ENCODE measurements at regions of chr13 and their contacts with region 1.

Region 1: DNA sequence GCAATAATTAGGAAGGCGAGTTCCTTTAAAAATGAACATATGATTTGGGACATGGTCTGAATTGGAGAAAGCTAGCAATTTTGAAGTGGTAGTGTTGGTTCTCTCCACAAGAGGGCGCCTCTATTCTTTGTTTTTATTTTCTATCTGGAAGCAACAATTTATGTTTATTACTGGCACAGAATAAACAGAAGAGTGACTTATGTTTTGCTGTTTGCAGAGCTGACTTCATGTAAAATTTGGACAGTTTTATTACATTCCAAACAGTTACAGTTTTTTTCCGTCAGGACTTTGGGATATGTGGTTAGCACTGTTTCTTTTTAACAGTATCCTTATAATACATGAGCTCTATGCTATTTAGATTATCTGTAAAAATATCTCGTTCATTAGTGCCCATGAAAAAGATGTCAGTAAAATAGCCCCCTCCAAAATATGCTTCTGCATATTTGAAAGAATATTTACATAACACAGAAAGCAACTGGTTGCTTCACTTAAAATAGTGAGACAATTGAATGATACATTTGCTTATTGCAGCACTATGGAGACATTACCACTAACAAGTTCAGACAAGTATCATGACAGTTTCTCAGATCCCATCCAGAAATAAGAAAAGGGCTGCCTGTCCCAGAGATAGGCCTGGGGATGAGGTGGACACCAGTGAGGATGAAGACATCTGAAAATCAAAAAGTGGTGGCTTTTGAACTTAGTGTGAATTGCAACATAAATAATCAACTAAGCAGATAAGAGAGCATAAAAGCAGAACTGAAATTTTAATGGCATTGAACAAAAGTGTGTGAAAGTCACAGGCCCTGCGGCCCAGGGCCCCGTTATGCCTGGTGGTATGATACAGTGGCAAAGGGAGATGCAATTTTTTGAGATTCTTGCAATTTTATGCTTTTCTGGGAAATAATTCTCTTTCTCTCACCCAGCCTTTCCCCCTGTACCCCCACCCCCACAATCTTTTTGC is 32.3 kb upstream of the FGF9 start:
- DNase-seq: peak; percentile 28
- H3K4me3 ChIP-seq: no peak overlapping the region
- H3K27ac ChIP-seq: no peak overlapping the region
- H3K4me1 ChIP-seq: no peaks in the 10 kb centered on the region
- H3K27me3 ChIP-seq: no peaks in the 10 kb centered on the region
- CTCF ChIP-seq: peak; percentile 30 to 59
- POLR2A ChIP-seq: no peak

Region 2: DNA sequence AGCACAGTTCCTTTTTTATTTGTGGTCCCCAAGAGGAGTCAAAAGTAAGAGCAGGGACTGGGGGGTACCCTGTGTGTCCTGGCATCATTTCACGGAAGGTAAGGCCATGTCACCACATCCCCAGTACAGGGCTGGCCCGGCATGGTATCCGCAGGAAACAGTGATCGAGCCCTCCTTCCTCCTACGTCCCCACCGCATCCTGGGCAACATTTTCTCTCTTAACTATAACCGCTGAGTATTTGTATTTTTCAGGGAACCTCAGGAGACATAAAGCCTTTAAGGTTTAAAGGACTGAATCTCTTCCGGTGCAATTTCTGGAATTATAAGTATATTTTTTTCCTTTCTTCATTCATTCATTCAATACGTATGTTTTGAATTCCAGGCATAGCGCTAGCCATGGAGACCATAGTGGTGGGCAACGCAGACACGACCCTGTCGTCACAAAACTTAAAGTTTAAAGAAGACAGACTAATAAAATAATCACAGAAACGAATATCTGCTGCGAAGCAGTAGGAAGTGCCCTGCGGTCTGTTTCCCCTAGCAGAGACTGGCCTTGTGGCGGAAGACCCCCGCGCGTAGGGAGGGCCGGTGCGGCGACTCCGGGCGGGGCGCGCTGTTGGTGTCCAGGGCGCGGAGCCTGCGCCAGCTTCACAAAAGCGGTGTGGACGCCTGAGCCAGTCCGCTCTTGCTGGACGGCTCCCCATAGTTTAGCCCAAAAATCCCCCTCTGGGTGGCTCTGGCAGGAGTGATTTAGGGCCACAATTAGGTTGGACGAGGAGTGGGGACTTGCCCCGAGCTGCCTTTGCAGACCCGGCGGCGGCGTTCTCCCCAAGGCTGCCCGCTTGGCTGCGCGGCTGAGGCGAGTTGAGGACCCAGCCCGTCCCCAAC is 563.3 kb before region 1 on chr13:
- CTCF ChIA-PET with region 1: no interaction called
- POLR2A ChIA-PET with region 1: no interaction called
- dilution Hi-C with region 1: no loop called
- intact Hi-C with region 1: no loop called
- DNase-seq: peak; percentile 59
- H3K4me3 ChIP-seq: peak overlapping the region in 2 of 3 experiments; percentile 51 to 52
- H3K27ac ChIP-seq: peak overlapping the region; percentile 95
- H3K4me1 ChIP-seq: peaks cover 31% of the 10 kb centered on the region
- H3K27me3 ChIP-seq: no peaks in the 10 kb centered on the region
- CTCF ChIP-seq: no peak
- POLR2A ChIP-seq: peak; percentile 76

Region 3: GRCh38 chr13:21348488-21349120 is 290.0 kb before region 1 on chr13:
- CTCF ChIA-PET with region 1: no interaction called
- POLR2A ChIA-PET with region 1: no interaction called
- dilution Hi-C with region 1: no loop called
- intact Hi-C with region 1: no loop called
- DNase-seq: no peak
- H3K4me3 ChIP-seq: no peak overlapping the region
- H3K27ac ChIP-seq: no peak overlapping the region
- H3K4me1 ChIP-seq: no peaks in the 10 kb centered on the region
- H3K27me3 ChIP-seq: no peaks in the 10 kb centered on the region
- CTCF ChIP-seq: no peak
- POLR2A ChIP-seq: no peak

Region 4: DNA sequence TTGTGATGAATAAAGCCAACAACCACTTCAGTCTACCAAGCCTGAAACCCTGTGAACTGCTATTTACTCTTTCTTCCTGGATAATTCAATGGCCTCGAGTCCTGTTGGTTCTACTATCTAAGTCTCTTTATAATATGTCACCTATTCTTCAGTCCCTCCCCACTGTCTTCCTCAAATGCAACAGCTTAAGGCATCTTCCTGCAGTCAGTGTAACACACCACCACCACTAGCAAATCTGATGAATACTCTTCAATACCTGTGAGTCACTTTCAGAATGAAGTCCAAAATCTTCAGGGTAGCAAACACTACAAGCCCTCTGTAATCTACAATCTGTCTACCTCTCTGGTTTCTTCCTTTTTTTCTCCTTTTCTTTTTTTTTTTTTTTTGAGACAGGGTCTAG is 212.4 kb before region 1 on chr13:
- CTCF ChIA-PET with region 1: no interaction called
- POLR2A ChIA-PET with region 1: no interaction called
- dilution Hi-C with region 1: no loop called
- intact Hi-C with region 1: no loop called
- DNase-seq: no peak
- H3K4me3 ChIP-seq: no peak overlapping the region
- H3K27ac ChIP-seq: no peak overlapping the region
- H3K4me1 ChIP-seq: no peaks in the 10 kb centered on the region
- H3K27me3 ChIP-seq: no peaks in the 10 kb centered on the region
- CTCF ChIP-seq: no peak
- POLR2A ChIP-seq: no peak

Region 5: GRCh38 chr13:21476893-21477472 is 161.6 kb before region 1 on chr13:
- CTCF ChIA-PET with region 1: no interaction called
- POLR2A ChIA-PET with region 1: no interaction called
- dilution Hi-C with region 1: no loop called
- intact Hi-C with region 1: no loop called
- DNase-seq: peak; percentile 75
- H3K4me3 ChIP-seq: peak overlapping the region in 2 of 3 experiments; percentile 3 to 26
- H3K27ac ChIP-seq: no peak overlapping the region
- H3K4me1 ChIP-seq: peaks cover 2% of the 10 kb centered on the region
- H3K27me3 ChIP-seq: no peaks in the 10 kb centered on the region
- CTCF ChIP-seq: peak; percentile 93 to 99
- POLR2A ChIP-seq: no peak

Region 6: GRCh38 chr13:21603531-21604448 is 34.8 kb before region 1 on chr13 and contains the start of gene MICU2:
- CTCF ChIA-PET with region 1: interaction called, 11 read pairs
- POLR2A ChIA-PET with region 1: no interaction called
- dilution Hi-C with region 1: no loop called
- intact Hi-C with region 1: no loop called
- DNase-seq: peak; percentile 95
- H3K4me3 ChIP-seq: peak within 1 kb of the TSS; percentile 39 to 98 (median 75)
- H3K27ac ChIP-seq: peak within 1 kb of the TSS; percentile 85
- H3K4me1 ChIP-seq: peaks cover 5% of the 10 kb centered on the region
- H3K27me3 ChIP-seq: peaks cover 10 to 27% of the 10 kb centered on the region in 2 experiments
- CTCF ChIP-seq: peak in 1 of 2 donors; percentile 10
- POLR2A ChIP-seq: peak; percentile 93
- total RNA-seq, gene MICU2: 24.0 and 25.1 TPM in 2 replicates

Region 7: DNA sequence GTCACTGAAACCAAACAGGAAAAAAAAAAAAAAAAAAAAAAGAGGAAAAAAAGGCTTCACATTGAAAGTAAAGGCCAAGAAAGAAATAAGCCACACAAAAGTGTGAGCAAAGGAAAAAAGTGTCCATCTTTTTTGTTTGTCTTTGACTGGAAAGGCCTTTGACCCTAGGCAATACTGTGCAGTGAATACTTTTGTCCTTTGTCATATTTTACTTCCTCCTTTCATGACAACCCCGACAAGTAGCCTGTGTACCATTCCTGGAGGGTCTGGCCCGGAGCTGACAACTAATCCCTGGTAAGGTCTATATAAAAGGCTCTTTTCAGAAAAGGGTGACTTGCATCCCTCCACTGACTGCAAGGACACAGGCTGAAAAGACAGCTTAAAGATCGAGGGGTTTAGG is 21.7 kb before region 1 on chr13:
- CTCF ChIA-PET with region 1: interaction called, 48 read pairs
- POLR2A ChIA-PET with region 1: no interaction called
- dilution Hi-C with region 1: no loop called
- intact Hi-C with region 1: no loop called
- DNase-seq: no peak
- H3K4me3 ChIP-seq: no peak overlapping the region
- H3K27ac ChIP-seq: no peak overlapping the region
- H3K4me1 ChIP-seq: no peaks in the 10 kb centered on the region
- H3K27me3 ChIP-seq: peaks cover 7 to 10% of the 10 kb centered on the region in 2 experiments
- CTCF ChIP-seq: no peak
- POLR2A ChIP-seq: no peak

Region 8: GRCh38 chr13:21657538-21657937 is 18.9 kb after region 1 on chr13:
- CTCF ChIA-PET with region 1: interaction called, 11 read pairs
- POLR2A ChIA-PET with region 1: no interaction called
- dilution Hi-C with region 1: no loop called
- intact Hi-C with region 1: no loop called
- DNase-seq: no peak
- H3K4me3 ChIP-seq: no peak overlapping the region
- H3K27ac ChIP-seq: no peak overlapping the region
- H3K4me1 ChIP-seq: no peaks in the 10 kb centered on the region
- H3K27me3 ChIP-seq: peaks cover 0 to 2% of the 10 kb centered on the region in 2 experiments
- CTCF ChIP-seq: no peak
- POLR2A ChIP-seq: no peak

Region 9: DNA sequence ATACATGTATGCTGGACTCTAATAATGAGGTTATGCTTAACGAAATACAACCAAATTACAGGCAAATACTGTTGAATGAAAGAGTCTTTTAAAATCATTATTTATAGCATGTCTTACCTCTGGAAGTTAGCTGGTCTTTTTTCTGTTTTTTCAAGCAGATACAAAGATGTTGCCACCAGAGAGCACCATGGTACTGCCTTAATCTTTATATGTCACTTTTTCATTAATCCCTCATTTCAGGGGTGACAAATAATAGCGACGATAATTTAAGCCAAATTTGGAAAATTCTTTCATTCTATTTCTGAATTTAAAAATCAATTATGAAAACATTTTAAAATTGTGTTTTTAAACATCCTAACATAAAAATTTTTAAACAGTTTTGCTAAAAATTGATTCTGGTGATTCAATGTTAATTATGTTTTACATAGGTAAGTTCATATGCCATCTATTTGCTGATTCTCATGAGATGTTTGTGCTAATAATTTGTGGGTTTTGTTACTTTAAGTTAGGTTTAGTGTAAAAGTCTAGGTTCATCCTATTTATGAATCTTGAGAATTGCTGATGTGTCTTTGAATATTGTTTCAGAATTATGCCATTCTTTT is 1162.9 kb after region 1 on chr13:
- CTCF ChIA-PET with region 1: interaction called, 42 read pairs
- POLR2A ChIA-PET with region 1: no interaction called
- dilution Hi-C with region 1: no loop called
- intact Hi-C with region 1: no loop called
- DNase-seq: peak; percentile 15
- H3K4me3 ChIP-seq: no peak overlapping the region
- H3K27ac ChIP-seq: no peak overlapping the region
- H3K4me1 ChIP-seq: no peaks in the 10 kb centered on the region
- H3K27me3 ChIP-seq: no peaks in the 10 kb centered on the region
- CTCF ChIP-seq: no peak
- POLR2A ChIP-seq: no peak

Region 10: DNA sequence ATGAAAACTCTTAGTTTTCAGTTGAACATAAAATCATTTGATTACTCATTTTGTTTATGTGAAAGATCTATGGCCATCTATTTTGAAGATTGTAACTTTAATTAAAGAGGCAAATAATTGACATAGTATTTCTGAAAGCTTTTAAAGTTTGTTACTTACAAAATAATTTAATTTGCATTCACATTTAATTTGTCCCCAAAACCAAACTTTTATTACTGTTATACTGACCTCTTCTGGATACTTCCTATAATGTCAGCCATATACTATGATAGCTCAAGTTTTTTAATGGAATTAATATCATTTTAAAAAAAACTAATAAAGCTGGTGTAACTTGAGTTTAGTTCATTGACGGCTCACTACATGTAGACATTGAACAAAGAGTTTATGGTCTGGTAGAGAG is 1537.3 kb after region 1 on chr13:
- CTCF ChIA-PET with region 1: interaction called, 13 read pairs
- POLR2A ChIA-PET with region 1: no interaction called
- dilution Hi-C with region 1: no loop called
- intact Hi-C with region 1: no loop called
- DNase-seq: peak; percentile 19
- H3K4me3 ChIP-seq: no peak overlapping the region
- H3K27ac ChIP-seq: no peak overlapping the region
- H3K4me1 ChIP-seq: no peaks in the 10 kb centered on the region
- H3K27me3 ChIP-seq: no peaks in the 10 kb centered on the region
- CTCF ChIP-seq: no peak
- POLR2A ChIP-seq: no peak